CD8-positive, alpha-beta memory T cell (primary cell): ENCODE measurements at regions of chr2 and their contacts with region 1.

Region 1: GRCh38 chr2:147843864-147844696 is 749 bp upstream of the ACVR2A start:
- DNase-seq: peak; percentile 61 to 87 (median 78)
- H3K4me3 ChIP-seq: peak overlapping the region; percentile 61
- H3K4me3 Mint-ChIP-seq: peak overlapping the region; percentile 87 to 98 (median 95)
- H3K27ac ChIP-seq: peak overlapping the region; percentile 34
- H3K27ac Mint-ChIP-seq: peak overlapping the region in 7 of 8 donors; percentile 15 to 94 (median 69)
- H3K4me1 ChIP-seq: peaks cover 14% of the 10 kb centered on the region
- H3K4me1 Mint-ChIP-seq: peaks cover 34 to 41% (median 39%) of the 10 kb centered on the region in 3 donors
- H3K27me3 ChIP-seq: no peaks in the 10 kb centered on the region
- H3K27me3 Mint-ChIP-seq: peaks cover 22 to 40% of the 10 kb centered on the region in 2 donors

Region 2: GRCh38 chr2:147017951-147018642 is 826.0 kb before region 1 on chr2:
- CTCF ChIA-PET with region 1: no interaction called
- POLR2A ChIA-PET with region 1: no interaction called
- DNase-seq: no peak
- H3K4me3 ChIP-seq: no peak overlapping the region
- H3K4me3 Mint-ChIP-seq: no peak overlapping the region
- H3K27ac ChIP-seq: no peak overlapping the region
- H3K27ac Mint-ChIP-seq: no peak overlapping the region
- H3K4me1 ChIP-seq: no peaks in the 10 kb centered on the region
- H3K4me1 Mint-ChIP-seq: no peaks in the 10 kb centered on the region
- H3K27me3 ChIP-seq: no peaks in the 10 kb centered on the region
- H3K27me3 Mint-ChIP-seq: peaks cover 0 to 1% of the 10 kb centered on the region in 2 donors

Region 3: GRCh38 chr2:147449323-147449991 is 394.6 kb before region 1 on chr2:
- CTCF ChIA-PET with region 1: no interaction called
- POLR2A ChIA-PET with region 1: interaction called, 14 read pairs
- DNase-seq: peak in 4 of 5 donors; percentile 2 to 46 (median 24)
- H3K4me3 ChIP-seq: no peak overlapping the region
- H3K4me3 Mint-ChIP-seq: peak overlapping the region; percentile 8 to 58 (median 34)
- H3K27ac ChIP-seq: peak overlapping the region; percentile 62
- H3K27ac Mint-ChIP-seq: peak overlapping the region; percentile 72 to 98 (median 87)
- H3K4me1 ChIP-seq: no peaks in the 10 kb centered on the region
- H3K4me1 Mint-ChIP-seq: peaks cover 2 to 26% (median 9%) of the 10 kb centered on the region in 3 donors
- H3K27me3 ChIP-seq: no peaks in the 10 kb centered on the region
- H3K27me3 Mint-ChIP-seq: no peaks in the 10 kb centered on the region